Activated CD4-positive, alpha-beta T cell treated with anti-CD3 and anti-CD28 coated beads, Interleukin-2, amount 10 ng/mL, durations not matched to agents 24 days and 14 days (primary cell): ENCODE measurements at regions of chr9 and their contacts with region 1.

Region 1: DNA sequence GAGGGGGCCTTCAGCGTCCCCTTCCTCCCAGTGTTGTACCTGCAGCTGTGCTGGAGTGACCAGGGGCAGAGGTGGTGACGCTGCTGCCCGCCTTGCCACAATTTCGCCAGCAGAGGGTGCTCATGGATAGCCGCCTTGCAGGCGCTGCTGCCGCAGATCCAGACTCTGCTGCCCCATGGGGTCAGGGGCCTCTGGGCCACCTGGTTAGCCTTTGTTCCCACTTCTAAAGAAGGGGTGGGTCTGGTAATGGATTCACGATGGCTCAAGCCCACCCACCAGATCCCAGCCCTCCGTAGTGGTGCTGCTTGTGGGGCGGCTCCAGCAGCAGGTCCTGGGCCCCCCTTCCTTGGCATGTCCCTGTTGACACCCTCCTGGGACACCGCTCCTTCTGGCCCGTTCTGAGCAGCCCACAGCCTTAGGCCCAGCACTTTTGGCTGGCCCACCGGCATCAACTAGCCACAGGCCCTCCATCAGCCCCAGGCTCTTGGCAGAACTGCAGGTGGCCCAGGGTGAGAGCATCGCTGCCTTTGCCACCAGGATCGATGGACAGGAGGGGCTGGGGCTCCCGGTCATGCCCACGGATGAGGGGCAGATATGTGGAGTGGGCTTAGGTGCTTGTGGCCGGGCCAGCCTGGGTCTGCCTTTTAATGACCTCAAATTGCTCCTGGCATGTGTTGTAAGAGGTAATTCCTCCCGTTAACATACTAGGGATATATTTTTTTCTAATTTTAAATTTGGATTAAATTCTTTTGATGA is 57.2 kb downstream of the COL5A1 start:
- DNase-seq: peak; percentile 84
- H3K4me3 Mint-ChIP-seq: no peak overlapping the region
- H3K27ac Mint-ChIP-seq: no peak overlapping the region
- H3K4me1 Mint-ChIP-seq: no peaks in the 10 kb centered on the region
- H3K27me3 Mint-ChIP-seq: no peaks in the 10 kb centered on the region

Region 2: DNA sequence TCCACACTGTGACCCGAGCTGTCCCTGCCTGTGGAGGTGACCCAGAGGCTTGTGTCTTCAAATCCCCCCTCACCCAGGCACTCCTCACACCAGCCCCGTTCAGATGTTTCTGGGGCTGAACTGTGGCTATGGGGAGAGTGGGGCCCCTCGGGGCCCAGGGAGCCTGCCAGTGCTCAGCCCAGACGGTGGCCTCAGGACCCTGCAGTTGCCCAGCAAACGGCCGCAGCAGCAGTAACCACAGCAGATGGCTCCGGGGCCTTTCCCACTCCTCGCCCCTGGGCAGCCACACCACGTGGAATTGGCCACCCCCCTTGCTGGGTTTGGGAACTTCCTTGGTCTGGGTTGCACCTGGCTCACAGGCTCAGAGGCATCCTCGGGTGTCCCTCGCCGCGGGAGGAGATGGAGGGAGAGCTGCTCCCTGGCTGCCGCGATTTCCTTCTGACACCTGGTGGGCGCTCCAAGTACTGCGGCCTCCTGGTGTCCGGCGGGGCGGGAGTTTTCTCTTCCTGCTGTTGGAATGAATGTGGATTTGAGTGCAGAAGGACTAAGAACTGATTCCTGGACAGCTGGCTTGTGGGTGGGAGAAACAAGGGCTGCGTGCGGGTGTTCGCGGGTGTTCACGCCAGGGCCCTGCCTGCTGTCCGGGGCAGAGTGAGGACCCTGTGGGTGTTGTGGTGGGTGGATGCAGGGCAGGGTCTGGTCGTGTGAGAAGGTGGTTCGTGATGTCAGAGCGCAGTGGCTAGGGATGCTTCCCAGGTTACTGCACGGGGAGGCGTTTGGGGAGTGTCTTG is 40.3 kb after region 1 on chr9:
- intact Hi-C with region 1: loop called (anchors 1 kb)
- DNase-seq: peak; percentile 77
- H3K4me3 Mint-ChIP-seq: no peak overlapping the region
- H3K27ac Mint-ChIP-seq: no peak overlapping the region
- H3K4me1 Mint-ChIP-seq: no peaks in the 10 kb centered on the region
- H3K27me3 Mint-ChIP-seq: no peaks in the 10 kb centered on the region

Region 3: DNA sequence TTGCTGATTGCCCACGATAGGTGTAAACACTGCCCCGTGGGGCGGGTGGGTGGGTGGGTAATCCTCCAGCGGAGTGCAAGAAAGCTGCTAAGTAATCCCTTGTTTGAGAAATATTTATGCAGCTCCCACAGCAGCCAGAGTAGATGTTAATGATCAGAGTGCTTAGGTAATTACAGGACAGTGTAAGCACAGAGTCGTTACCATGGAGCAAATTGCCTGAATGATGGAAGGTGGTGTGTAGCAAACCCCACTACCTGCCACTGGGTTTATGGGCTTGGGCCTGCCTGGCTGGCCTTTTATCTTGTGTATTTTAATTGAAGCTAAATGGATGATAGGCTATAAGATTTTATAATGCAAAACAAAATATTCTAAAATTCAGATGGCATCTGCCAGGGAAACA is 52.9 kb after region 1 on chr9:
- intact Hi-C with region 1: no loop called
- DNase-seq: no peak
- H3K4me3 Mint-ChIP-seq: no peak overlapping the region
- H3K27ac Mint-ChIP-seq: no peak overlapping the region
- H3K4me1 Mint-ChIP-seq: no peaks in the 10 kb centered on the region
- H3K27me3 Mint-ChIP-seq: no peaks in the 10 kb centered on the region

Region 4: GRCh38 chr9:134858051-134858841 is 159.5 kb after region 1 on chr9:
- intact Hi-C with region 1: loop called (anchors 5 kb)
- DNase-seq: peak; percentile 59
- H3K4me3 Mint-ChIP-seq: peak overlapping the region; percentile 64
- H3K27ac Mint-ChIP-seq: peak overlapping the region; percentile 88
- H3K4me1 Mint-ChIP-seq: peaks cover 6% of the 10 kb centered on the region
- H3K27me3 Mint-ChIP-seq: no peaks in the 10 kb centered on the region

Region 5: GRCh38 chr9:135410831-135411473 is 712.2 kb after region 1 on chr9:
- intact Hi-C with region 1: loop called (anchors 5 kb)
- DNase-seq: no peak
- H3K4me3 Mint-ChIP-seq: no peak overlapping the region
- H3K27ac Mint-ChIP-seq: no peak overlapping the region
- H3K4me1 Mint-ChIP-seq: no peaks in the 10 kb centered on the region
- H3K27me3 Mint-ChIP-seq: no peaks in the 10 kb centered on the region